ENCODE measurements at regions of chr1 and their contacts with region 1.

Region 1: GRCh38 chr1:84573967-84574842 is at the start of gene CTBS:
- DNase-seq: peak; percentile 87 to 89
- H3K4me3 ChIP-seq: peak within 1 kb of the TSS; percentile 38 to 81 (median 60)
- H3K27ac ChIP-seq: peak within 1 kb of the TSS; percentile 93 to 95 (median 95)
- H3K4me1 ChIP-seq: peaks cover 11 to 17% of the 10 kb centered on the region in 2 donors
- H3K27me3 ChIP-seq: no peaks in the 10 kb centered on the region
- CTCF ChIP-seq: peak in 1 of 6 experiments; percentile 8
- POLR2A ChIP-seq: peak; percentile 13 to 89
- total RNA-seq, gene CTBS: 14.9 to 24.1 (median 17.1) TPM

Region 2: DNA sequence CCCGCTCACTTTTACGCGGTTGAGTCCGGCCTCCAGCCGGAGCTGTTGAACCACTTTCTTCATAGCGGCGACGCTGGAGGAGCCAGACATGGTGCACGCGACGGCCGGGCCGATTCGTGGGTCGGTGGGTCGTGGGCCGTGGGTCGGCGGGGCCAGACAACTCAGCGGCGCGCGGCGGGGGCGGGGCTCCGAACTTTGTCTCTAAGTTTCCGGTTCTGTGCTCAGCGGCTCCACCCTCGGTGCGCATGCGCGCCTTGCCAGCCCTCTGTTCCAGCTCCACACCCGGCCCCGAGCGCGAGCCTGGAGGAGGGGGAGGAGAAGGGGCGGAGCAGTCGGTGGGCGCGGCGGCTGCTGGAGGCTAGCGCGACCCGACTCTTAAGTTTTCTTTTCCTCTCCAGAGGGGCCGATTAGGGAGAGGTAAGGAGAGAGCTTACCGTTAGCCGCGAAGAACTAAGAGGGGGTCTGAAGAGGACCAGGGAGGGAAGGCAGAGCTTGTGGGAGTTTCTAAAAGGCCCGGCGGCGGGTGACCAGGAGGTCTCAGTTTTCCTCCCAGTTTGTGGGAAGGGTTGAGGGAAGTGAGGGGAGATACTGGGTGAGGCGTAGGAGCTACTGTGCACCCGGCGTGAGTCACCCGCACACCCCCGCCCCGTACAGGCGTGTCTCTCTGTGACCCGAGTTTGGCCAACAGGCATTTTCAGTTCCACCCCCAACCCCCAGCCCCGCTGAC is 68.0 kb before region 1 on chr1 and contains the starts of genes GNG5 and SPATA1:
- intact Hi-C with region 1: loop called (anchors 10 kb)
- DNase-seq: peak; percentile 99
- H3K4me3 ChIP-seq: peak within 1 kb of the TSS; percentile 42 to 81 (median 43)
- H3K27ac ChIP-seq: peak within 1 kb of the TSS; percentile 95 to 98 (median 96)
- H3K4me1 ChIP-seq: peaks cover 16 to 26% of the 10 kb centered on the region in 2 donors
- H3K27me3 ChIP-seq: no peaks in the 10 kb centered on the region
- CTCF ChIP-seq: no peak
- POLR2A ChIP-seq: peak; percentile 9 to 88
- total RNA-seq, gene GNG5: 58.3 to 143 (median 95.2) TPM
- total RNA-seq, gene SPATA1: 0.13 to 2.8 (median 1.8) TPM in 3 of 4 donors, not detected in the other